Activated CD4-positive, alpha-beta T cell treated with anti-CD3 and anti-CD28 coated beads for 36 hours (primary cell): ENCODE measurements at regions of chr5 and their contacts with region 1.

Region 1: DNA sequence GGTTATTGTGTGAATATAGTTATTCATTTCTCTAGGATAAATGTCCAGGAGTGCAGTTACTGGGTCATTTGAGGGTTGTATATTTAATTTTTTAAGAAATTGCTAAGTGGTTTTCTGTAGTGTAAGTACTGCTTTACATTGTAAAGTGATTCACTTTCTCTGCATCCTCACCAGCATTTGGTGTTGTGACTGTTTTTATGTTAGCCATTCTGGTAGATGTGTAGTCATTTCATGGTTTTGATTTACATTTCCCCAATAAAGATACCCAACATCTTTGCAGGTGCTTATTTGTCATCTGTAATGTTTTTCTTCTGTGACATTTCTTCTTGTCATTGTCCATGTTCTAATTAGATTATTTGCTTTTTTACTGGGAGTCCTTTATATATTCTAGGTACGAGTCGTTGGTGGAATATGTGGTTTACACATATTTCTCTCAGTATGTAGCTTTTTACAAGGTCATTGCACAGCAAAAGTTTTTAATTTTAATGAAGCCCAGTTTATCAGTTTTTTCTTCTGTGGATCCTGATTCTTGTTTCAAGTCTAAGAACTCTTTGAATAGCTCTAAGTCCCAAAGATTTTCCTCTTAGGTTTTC is 34.0 kb downstream of the SCGB3A1 start:
- DNase-seq: no peak
- ATAC-seq: peak; percentile 83
- H3K4me3 Mint-ChIP-seq: no peak overlapping the region
- H3K27ac Mint-ChIP-seq: no peak overlapping the region
- H3K4me1 Mint-ChIP-seq: peaks cover 31% of the 10 kb centered on the region
- H3K27me3 Mint-ChIP-seq: no peaks in the 10 kb centered on the region

Region 2: DNA sequence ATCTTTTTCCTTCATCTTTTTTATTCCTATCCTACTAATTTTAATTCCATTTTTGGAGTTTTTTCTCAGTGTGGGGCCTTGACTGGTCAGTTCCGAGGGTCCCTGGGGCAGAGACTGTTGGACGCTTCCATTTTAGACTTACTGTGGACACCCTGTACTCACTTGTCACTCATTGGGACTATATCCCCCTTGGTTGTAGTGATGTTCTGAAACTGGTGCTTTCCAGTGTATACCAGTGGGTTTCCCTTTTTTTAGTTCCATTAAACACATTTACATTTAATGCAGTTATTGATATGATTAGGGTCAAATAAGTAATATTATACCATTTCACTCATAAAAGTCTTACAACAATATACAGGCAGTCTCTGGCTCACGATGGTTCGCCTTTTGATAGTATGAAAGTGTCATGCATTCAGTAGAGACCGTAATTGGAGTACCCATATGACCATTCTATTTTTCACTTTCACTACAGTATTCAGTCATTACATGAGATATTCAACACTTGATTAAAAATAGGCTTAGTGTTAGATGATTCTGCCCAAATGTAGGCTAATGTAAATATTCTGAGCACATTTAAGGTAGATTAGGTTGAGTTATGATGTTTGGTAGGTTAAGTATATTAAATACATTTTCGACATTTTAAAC is 17.1 kb before region 1 on chr5:
- CTCF ChIA-PET with region 1: interaction called, 4 read pairs
- POLR2A ChIA-PET with region 1: no interaction called
- intact Hi-C with region 1: loop called in 1 of 2 experiments (anchors 2 kb)
- DNase-seq: no peak
- ATAC-seq: peak; percentile 86
- H3K4me3 Mint-ChIP-seq: no peak overlapping the region
- H3K27ac Mint-ChIP-seq: peak overlapping the region; percentile 73
- H3K4me1 Mint-ChIP-seq: peaks cover 16% of the 10 kb centered on the region
- H3K27me3 Mint-ChIP-seq: no peaks in the 10 kb centered on the region

Region 3: GRCh38 chr5:180908998-180909731 is 351.9 kb after region 1 on chr5:
- CTCF ChIA-PET with region 1: no interaction called
- POLR2A ChIA-PET with region 1: no interaction called
- intact Hi-C with region 1: no loop called
- DNase-seq: peak; percentile 26
- ATAC-seq: peak; percentile 49
- H3K4me3 Mint-ChIP-seq: no peak overlapping the region
- H3K27ac Mint-ChIP-seq: no peak overlapping the region
- H3K4me1 Mint-ChIP-seq: no peaks in the 10 kb centered on the region
- H3K27me3 Mint-ChIP-seq: peaks cover 11% of the 10 kb centered on the region